Brain microvascular endothelial cell (primary cell): ENCODE measurements at regions of chr9 and their contacts with region 1.

Region 1: GRCh38 chr9:87662808-87663528 is 63.0 kb upstream of the CTSL start:
- DNase-seq: peak; percentile 67
- H3K4me3 ChIP-seq: no peak overlapping the region
- H3K27ac ChIP-seq: no peak overlapping the region
- H3K27me3 ChIP-seq: no peaks in the 10 kb centered on the region
- CTCF ChIP-seq: peak; percentile 95

Region 2: DNA sequence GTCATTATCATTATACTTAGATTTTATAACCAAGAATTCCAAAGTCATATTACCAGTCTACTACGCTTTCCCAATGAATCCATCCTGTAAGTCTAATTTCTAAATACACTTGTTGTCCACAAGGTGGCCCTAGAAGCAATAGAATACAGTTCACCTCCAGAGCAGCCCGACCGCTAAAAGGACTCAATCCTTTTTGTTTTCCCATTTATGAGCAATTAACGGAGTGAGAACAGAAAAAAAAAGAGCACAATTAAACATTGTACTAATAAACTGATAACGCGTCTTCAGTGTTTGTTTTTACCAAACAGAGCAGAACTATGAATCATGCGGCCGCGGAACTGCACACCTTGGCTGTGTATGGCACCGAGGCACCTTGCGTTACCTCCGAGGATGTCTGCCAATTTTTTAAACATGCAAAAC is 326.0 kb before region 1 on chr9:
- in situ Hi-C with region 1: loop called (anchors 25 kb)
- DNase-seq: peak; percentile 42
- H3K4me3 ChIP-seq: peak overlapping the region; percentile 35
- H3K27ac ChIP-seq: no peak overlapping the region
- H3K27me3 ChIP-seq: no peaks in the 10 kb centered on the region
- CTCF ChIP-seq: peak; percentile 65

Region 3: GRCh38 chr9:87749335-87750035 is 86.5 kb after region 1 on chr9:
- in situ Hi-C with region 1: no loop called
- DNase-seq: no peak
- H3K4me3 ChIP-seq: no peak overlapping the region
- H3K27ac ChIP-seq: no peak overlapping the region
- H3K27me3 ChIP-seq: no peaks in the 10 kb centered on the region
- CTCF ChIP-seq: no peak

Region 4: GRCh38 chr9:87776481-87777379 is 113.8 kb after region 1 on chr9:
- in situ Hi-C with region 1: no loop called
- DNase-seq: no peak
- H3K4me3 ChIP-seq: no peak overlapping the region
- H3K27ac ChIP-seq: no peak overlapping the region
- H3K27me3 ChIP-seq: no peaks in the 10 kb centered on the region
- CTCF ChIP-seq: no peak